ENCODE measurements at regions of chr7 and their contacts with region 1.

Region 1: DNA sequence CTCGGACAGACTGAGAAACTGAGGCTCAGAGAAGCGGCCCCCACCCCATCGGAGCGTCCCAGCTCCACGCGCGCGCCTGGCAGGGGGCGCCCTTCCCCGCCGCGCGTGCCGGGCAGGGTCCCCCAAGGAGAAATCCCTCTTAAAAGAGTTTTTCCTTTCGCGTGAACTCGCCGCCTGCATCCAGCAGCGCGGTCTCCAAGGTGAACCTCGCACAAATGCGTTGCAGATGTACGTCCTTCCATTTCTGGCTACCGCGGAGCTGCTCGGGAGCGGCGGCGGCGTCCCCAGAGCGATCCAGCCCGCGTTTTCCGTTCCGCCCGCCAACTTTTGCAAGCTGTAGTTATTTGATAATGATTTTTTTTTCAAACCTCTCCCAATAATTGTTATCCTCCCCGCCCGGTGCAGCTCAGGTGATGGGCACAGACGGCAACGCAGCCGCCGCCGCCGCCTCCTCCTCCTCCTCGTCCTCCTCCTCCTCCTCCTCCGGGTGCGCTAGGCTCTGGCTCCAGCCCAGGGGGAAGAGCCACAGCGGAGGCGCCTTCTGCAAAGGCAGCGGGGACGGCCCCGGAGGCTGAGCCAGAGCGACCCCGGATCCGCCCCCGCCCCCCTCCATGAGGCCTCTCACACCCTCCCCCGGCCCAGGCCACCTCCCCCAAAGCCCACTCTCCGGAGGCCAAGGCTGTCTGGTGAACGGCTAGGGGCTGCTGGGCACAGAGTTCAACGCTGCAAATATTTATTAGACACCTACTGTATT is 74.0 kb upstream of the CUX1 start:
- DNase-seq: peak; percentile 78
- ATAC-seq: peak; percentile 44
- H3K4me3 ChIP-seq: peak overlapping the region; percentile 1 to 62 (median 57)
- H3K4me3 Mint-ChIP-seq: peak overlapping the region; percentile 83
- H3K27ac ChIP-seq: no peak overlapping the region
- H3K27ac Mint-ChIP-seq: peak overlapping the region; percentile 32
- H3K4me1 ChIP-seq: peaks cover 42 to 63% of the 10 kb centered on the region in 2 donors
- H3K4me1 Mint-ChIP-seq: peaks cover 51% of the 10 kb centered on the region
- H3K27me3 ChIP-seq: peaks cover 0 to 8% (median 0%) of the 10 kb centered on the region in 4 experiments
- H3K27me3 Mint-ChIP-seq: no peaks in the 10 kb centered on the region
- CTCF ChIP-seq: peak; percentile 67

Region 2: DNA sequence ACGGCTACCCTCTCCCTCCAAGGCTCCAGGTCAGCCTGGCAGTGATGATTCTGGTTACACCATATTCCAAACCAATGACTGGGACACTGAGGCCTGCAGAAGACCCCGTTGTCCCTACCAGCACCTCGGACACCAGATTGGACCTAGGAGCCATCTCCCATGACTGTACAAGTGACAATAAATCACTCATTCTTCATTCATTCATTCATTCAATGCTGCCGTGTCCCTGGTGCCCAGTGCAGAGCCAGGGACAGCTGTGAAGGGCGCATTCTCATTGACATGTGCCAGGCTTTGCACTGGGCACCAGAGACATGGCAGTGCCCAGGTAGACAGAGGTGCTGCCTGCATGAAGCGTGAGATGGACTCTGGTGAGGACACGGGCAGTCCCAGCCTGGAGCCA is 47.1 kb before region 1 on chr7:
- CTCF ChIA-PET with region 1: no interaction called
- POLR2A ChIA-PET with region 1: no interaction called
- intact Hi-C with region 1: no loop called
- DNase-seq: no peak
- ATAC-seq: no peak
- H3K4me3 ChIP-seq: no peak overlapping the region
- H3K4me3 Mint-ChIP-seq: no peak overlapping the region
- H3K27ac ChIP-seq: no peak overlapping the region
- H3K27ac Mint-ChIP-seq: no peak overlapping the region
- H3K4me1 ChIP-seq: no peaks in the 10 kb centered on the region
- H3K4me1 Mint-ChIP-seq: peaks cover 2% of the 10 kb centered on the region
- H3K27me3 ChIP-seq: no peaks in the 10 kb centered on the region
- H3K27me3 Mint-ChIP-seq: peaks cover 5% of the 10 kb centered on the region
- CTCF ChIP-seq: no peak

Region 3: GRCh38 chr7:101815835-101816493 is 72.5 kb after region 1 on chr7:
- CTCF ChIA-PET with region 1: interaction called, 25 read pairs
- POLR2A ChIA-PET with region 1: interaction called, 9 read pairs
- intact Hi-C with region 1: loop called (anchors 1 kb)
- DNase-seq: peak; percentile 87
- ATAC-seq: peak; percentile 73
- H3K4me3 ChIP-seq: peak overlapping the region; percentile 49 to 73 (median 61)
- H3K4me3 Mint-ChIP-seq: peak overlapping the region; percentile 88
- H3K27ac ChIP-seq: peak overlapping the region in 1 of 2 donors; percentile 18
- H3K27ac Mint-ChIP-seq: peak overlapping the region; percentile 89
- H3K4me1 ChIP-seq: peaks cover 7 to 16% of the 10 kb centered on the region in 2 donors
- H3K4me1 Mint-ChIP-seq: peaks cover 28% of the 10 kb centered on the region
- H3K27me3 ChIP-seq: no peaks in the 10 kb centered on the region
- H3K27me3 Mint-ChIP-seq: no peaks in the 10 kb centered on the region
- CTCF ChIP-seq: no peak